ENCODE measurements at regions of chr13 and their contacts with region 1.

Region 1: DNA sequence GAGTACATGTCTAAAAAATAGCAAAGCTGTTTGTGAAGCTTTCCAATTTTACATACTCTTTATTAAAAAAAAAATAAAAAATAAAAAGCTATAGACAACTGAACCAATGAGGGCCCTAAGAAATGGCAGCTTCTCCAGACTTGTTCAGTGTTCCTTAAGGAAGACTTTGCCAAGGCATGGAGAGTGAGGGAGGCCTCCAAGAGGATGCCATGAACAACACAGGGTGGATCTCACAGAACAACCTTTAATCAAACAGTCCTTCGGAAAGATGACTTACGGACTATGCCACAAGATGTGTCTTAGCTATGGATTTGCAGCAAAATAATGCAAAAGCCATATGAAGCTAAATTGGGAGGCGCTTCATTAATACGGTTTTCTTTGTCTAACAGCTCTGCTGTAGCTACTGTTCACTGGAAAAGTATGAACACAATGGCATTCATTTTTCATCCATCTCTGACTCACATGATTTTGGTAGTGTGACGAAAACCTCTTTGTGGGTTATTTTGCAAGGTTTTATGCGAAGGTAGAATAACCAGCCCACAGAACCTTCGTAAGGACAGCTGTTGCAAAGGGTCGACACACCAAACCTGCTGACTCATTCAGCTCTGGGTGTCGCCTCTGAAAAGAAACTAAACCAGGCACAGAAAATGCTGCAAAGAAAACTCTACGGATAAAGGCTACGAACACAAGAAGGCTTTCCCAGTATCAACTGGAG is 27.7 kb downstream of the EFNB2 start:
- DNase-seq: peak; percentile 95
- ATAC-seq: peak; percentile 85
- H3K4me3 ChIP-seq: peak overlapping the region; percentile 2; the same call in 1 of the 2 replicates
- H3K27ac ChIP-seq: peak overlapping the region; percentile 57; the same call in 1 of the 2 replicates
- H3K4me1 ChIP-seq: peaks cover 3% of the 10 kb centered on the region; the same call in 1 of the 2 replicates
- H3K27me3 ChIP-seq: no peaks in the 10 kb centered on the region
- CTCF ChIP-seq: no peak
- POLR2A ChIP-seq: no peak
- RAD21 ChIP-seq: peak; percentile 10; the same call in 1 of the 2 replicates

Region 2: GRCh38 chr13:106156468-106156867 is 351.2 kb before region 1 on chr13:
- CTCF ChIA-PET with region 1: no interaction called
- POLR2A ChIA-PET with region 1: no interaction called
- dilution Hi-C with region 1: no loop called
- in situ Hi-C with region 1: no loop called
- intact Hi-C with region 1: loop called (anchors 5 kb)
- DNase-seq: peak; percentile 99
- ATAC-seq: peak; percentile 89
- H3K4me3 ChIP-seq: no peak overlapping the region
- H3K27ac ChIP-seq: peak overlapping the region; percentile 61
- H3K4me1 ChIP-seq: peaks cover 7% of the 10 kb centered on the region
- H3K27me3 ChIP-seq: no peaks in the 10 kb centered on the region
- CTCF ChIP-seq: no peak
- POLR2A ChIP-seq: peak; percentile 72; the same call in 1 of the 2 replicates
- RAD21 ChIP-seq: no peak

Region 3: GRCh38 chr13:106471957-106472543 is 35.7 kb before region 1 on chr13:
- CTCF ChIA-PET with region 1: no interaction called
- POLR2A ChIA-PET with region 1: no interaction called
- dilution Hi-C with region 1: no loop called
- in situ Hi-C with region 1: no loop called
- intact Hi-C with region 1: no loop called
- DNase-seq: peak; percentile 91
- ATAC-seq: peak; percentile 100
- H3K4me3 ChIP-seq: peak overlapping the region; percentile 24; the same call in 1 of the 2 replicates
- H3K27ac ChIP-seq: no peak overlapping the region
- H3K4me1 ChIP-seq: no peaks in the 10 kb centered on the region
- H3K27me3 ChIP-seq: no peaks in the 10 kb centered on the region
- CTCF ChIP-seq: no peak
- POLR2A ChIP-seq: no peak
- RAD21 ChIP-seq: peak; percentile 15; the same call in 1 of the 2 replicates